PC-3 (cell line): ENCODE measurements at regions of chr10 and their contacts with region 1.

Region 1: DNA sequence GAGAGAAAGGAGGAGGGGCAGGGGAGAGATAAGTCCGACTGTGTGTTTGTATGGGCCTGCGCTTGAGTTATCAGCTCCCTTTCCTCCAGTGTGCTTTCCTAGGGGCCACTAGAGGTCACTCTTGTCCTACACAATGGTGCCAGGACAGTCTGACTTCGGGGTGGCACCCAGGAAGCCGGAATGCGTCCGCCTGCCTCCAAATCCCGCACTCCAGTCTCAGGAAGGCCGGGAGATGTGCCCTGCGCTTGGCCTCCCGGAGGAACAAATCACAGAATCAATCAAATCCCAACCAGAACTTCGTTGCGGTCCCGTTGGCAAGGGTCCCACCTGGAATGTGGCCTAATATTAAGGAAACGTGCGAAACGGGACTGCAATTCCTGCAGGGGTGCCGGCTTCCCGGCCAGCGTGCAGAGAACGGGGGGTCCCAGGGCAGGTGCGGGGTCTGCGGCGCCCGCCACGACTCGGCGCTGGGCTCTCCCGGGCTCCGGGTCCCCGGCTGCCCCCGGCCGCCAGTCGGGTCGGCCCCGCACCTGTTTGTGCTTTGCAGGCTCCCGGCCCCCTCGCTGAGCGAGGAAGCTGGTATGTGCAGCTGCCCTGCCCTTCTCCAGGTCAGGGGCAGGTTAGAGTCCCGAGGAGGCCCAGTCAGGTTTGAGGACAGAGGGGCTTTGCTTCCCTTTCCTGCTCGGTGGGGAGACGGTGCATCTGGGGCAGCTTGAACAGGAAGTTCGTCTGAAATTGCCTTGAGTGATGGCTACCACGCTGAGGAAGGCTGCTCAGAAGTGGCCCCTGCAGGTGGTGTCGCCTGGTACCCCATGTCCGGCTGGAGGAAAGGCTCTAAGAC is 21.0 kb upstream of the HPS1 start:
- DNase-seq: peak; percentile 80
- ATAC-seq: peak; percentile 94
- H3K4me3 ChIP-seq: peak overlapping the region; percentile 72
- H3K27ac ChIP-seq: no peak overlapping the region
- H3K4me1 ChIP-seq: peaks cover 17% of the 10 kb centered on the region
- H3K27me3 ChIP-seq: no peaks in the 10 kb centered on the region
- CTCF ChIP-seq: peak; percentile 76

Region 2: DNA sequence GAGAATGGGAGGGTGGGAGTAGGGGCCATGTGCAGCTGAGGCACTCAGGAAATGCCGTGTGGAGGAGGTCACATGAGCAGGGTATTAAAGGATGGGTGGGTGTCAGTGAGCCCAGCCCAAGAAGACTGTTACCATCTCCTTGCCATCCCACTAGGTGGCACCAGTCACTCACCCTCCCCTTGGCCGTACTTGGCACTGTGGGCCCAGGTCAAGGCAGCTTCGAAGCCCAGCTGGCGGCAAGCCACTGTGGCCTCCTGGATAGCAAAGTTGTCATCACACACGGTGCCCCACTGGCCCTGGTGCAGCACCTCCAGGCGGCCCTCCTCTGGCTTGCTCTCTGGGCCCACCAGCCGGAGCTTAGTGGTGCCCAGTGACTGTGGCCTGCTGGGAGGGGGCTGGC is 205.2 kb before region 1 on chr10:
- CTCF ChIA-PET with region 1: interaction called, 3 read pairs
- POLR2A ChIA-PET with region 1: interaction called, 3 read pairs
- intact Hi-C with region 1: loop called (anchors 5 kb)
- DNase-seq: peak; percentile 70
- ATAC-seq: peak; percentile 45
- H3K4me3 ChIP-seq: no peak overlapping the region
- H3K27ac ChIP-seq: no peak overlapping the region
- H3K4me1 ChIP-seq: peaks cover 25% of the 10 kb centered on the region
- H3K27me3 ChIP-seq: no peaks in the 10 kb centered on the region
- CTCF ChIP-seq: peak; percentile 68

Region 3: DNA sequence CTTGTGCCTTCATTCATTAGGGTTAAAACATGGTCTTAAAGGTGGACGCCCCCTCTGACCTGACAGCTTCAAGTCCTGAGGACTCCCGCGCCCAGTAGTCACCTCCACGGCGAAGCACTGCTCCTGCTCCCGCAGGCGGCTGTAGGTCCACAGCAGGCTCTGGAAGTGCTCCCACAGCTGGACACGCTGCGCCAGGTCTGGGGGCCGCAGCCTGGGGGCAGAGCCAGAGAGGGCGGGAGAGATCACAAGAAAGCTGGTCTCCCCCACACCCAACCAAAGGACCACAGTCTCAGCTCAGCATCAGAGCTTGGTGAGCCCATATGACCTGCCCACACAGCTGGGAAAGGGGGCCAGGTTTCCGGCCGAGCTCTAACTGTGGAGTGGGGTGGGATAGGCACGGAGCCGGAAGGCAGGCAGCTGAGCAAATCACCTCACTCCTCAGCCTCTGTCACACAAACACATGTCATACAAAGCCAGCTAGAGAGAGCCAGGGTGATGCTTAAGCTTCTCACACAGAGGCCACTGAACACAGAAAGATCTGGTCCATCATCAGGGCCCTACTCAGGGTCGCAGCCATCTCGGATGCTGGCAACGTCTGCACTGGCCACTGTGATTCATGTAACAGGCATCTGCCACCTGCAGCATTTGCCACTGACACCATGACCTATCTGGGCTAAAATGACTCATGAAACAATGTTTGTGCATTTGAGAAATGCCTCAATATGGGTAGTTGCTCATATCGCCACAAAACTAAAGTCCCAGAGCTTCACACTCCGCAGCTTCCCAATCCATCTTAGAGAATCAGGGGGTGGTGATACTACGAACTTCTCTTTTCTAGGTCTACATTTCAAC is 33.6 kb before region 1 on chr10:
- CTCF ChIA-PET with region 1: no interaction called
- POLR2A ChIA-PET with region 1: no interaction called
- intact Hi-C with region 1: loop called (anchors 1 kb)
- DNase-seq: peak; percentile 81
- ATAC-seq: peak; percentile 82
- H3K4me3 ChIP-seq: no peak overlapping the region
- H3K27ac ChIP-seq: no peak overlapping the region
- H3K4me1 ChIP-seq: peaks cover 13% of the 10 kb centered on the region
- H3K27me3 ChIP-seq: no peaks in the 10 kb centered on the region
- CTCF ChIP-seq: no peak

Region 4: DNA sequence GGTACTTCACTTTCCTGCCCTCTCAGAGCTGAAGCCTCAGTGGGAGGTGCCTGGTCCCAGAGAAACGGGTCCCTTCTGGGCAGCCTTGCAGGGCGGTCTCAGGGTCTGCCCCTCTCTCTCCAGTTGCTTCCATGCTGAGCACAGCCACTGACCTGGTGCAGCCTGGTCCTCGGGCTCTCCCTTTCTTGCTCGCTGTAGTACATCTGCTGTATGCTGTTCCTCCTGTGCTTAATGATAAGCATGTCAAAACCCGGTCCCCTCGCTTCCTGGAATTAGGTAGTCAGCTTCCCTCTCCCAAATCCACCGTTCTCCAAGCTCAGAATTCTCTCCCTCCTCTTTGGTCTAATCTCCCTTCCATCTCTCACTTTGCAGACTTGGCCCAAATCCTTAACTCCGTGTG is 10.0 kb before region 1 on chr10:
- CTCF ChIA-PET with region 1: no interaction called
- POLR2A ChIA-PET with region 1: no interaction called
- intact Hi-C with region 1: no loop called
- DNase-seq: no peak
- ATAC-seq: no peak
- H3K4me3 ChIP-seq: no peak overlapping the region
- H3K27ac ChIP-seq: no peak overlapping the region
- H3K4me1 ChIP-seq: peaks cover 20% of the 10 kb centered on the region
- H3K27me3 ChIP-seq: no peaks in the 10 kb centered on the region
- CTCF ChIP-seq: no peak

Region 5: GRCh38 chr10:98664331-98665042 is 196.8 kb after region 1 on chr10:
- CTCF ChIA-PET with region 1: interaction called, 3 read pairs
- POLR2A ChIA-PET with region 1: no interaction called
- intact Hi-C with region 1: loop called (anchors 1 kb)
- DNase-seq: peak; percentile 67
- ATAC-seq: peak; percentile 77
- H3K4me3 ChIP-seq: no peak overlapping the region
- H3K27ac ChIP-seq: no peak overlapping the region
- H3K4me1 ChIP-seq: no peaks in the 10 kb centered on the region
- H3K27me3 ChIP-seq: no peaks in the 10 kb centered on the region
- CTCF ChIP-seq: peak; percentile 71

Region 6: GRCh38 chr10:99042051-99042771 is 574.5 kb after region 1 on chr10:
- CTCF ChIA-PET with region 1: interaction called, 5 read pairs
- POLR2A ChIA-PET with region 1: no interaction called
- intact Hi-C with region 1: loop called (anchors 1 kb)
- DNase-seq: no peak
- ATAC-seq: no peak
- H3K4me3 ChIP-seq: no peak overlapping the region
- H3K27ac ChIP-seq: no peak overlapping the region
- H3K4me1 ChIP-seq: no peaks in the 10 kb centered on the region
- H3K27me3 ChIP-seq: no peaks in the 10 kb centered on the region
- CTCF ChIP-seq: no peak

Region 7: DNA sequence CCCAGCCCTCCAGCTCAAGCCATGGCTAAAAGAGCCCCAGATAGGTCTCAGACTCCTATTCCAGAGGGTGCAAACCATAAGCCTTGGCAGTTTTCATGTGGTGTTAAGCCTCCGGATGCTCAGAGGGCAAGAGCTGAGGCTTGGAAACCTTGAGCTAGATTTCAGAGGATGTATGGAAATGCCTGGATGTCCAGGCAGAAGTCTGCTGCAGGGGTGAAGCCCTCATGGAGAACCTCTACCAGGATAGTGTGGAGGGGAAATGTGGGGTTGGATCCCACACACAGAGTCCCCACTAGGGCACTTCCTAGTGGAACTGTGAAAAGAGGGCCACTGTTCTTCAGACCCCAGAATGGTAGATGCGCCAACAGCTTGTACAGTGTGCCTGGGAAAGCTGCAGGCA is 781.1 kb after region 1 on chr10:
- CTCF ChIA-PET with region 1: interaction called, 3 read pairs
- POLR2A ChIA-PET with region 1: no interaction called
- intact Hi-C with region 1: loop called (anchors 5 kb)
- DNase-seq: no peak
- ATAC-seq: no peak
- H3K4me3 ChIP-seq: no peak overlapping the region
- H3K27ac ChIP-seq: no peak overlapping the region
- H3K4me1 ChIP-seq: no peaks in the 10 kb centered on the region
- H3K27me3 ChIP-seq: no peaks in the 10 kb centered on the region
- CTCF ChIP-seq: no peak

Region 8: DNA sequence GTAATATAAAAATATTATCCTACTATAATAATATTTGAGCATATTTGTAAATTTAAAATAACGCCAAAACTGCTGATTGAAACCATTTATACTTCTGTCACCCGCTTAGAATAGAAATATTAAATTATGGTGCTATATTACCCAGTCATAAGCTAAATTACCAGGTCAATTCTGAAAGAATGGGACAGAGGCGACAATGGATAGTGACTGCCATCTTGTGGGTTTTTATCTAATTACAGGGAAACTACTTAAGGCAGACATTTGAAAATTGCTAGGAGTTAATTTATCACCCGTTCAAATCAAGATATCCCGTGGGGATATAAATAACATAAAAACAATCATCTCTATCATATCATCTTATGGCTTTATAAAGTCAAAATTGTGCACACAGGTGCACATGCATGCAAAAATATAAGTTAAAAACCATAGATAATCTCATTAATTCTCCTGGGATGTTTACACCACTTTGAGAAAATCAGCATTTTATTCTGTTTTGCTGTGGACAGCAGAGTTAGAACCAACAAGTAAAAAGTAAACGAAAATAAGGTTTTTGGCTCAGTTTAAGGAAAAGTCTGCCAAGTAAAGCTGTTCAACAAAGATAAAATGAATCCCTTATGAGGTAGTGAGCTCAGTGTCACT is 809.2 kb after region 1 on chr10:
- CTCF ChIA-PET with region 1: interaction called, 4 read pairs
- POLR2A ChIA-PET with region 1: no interaction called
- intact Hi-C with region 1: loop called (anchors 2 kb)
- DNase-seq: peak; percentile 56
- ATAC-seq: no peak
- H3K4me3 ChIP-seq: no peak overlapping the region
- H3K27ac ChIP-seq: no peak overlapping the region
- H3K4me1 ChIP-seq: peaks cover 22% of the 10 kb centered on the region
- H3K27me3 ChIP-seq: no peaks in the 10 kb centered on the region
- CTCF ChIP-seq: peak; percentile 70